Activated B cell treated with CpG ODN at 0.5 μM for 24 hours (primary cell): ENCODE measurements at regions of chr6 and their contacts with region 1.

Region 1: GRCh38 chr6:3356056-3356761 is 97.5 kb downstream of the PSMG4 start:
- DNase-seq: peak; percentile 70
- ATAC-seq: peak; percentile 97
- H3K4me3 Mint-ChIP-seq: peak overlapping the region; percentile 90
- H3K27ac Mint-ChIP-seq: peak overlapping the region; percentile 95
- H3K4me1 Mint-ChIP-seq: peaks cover 36% of the 10 kb centered on the region
- H3K27me3 Mint-ChIP-seq: no peaks in the 10 kb centered on the region
- CTCF ChIP-seq: no peak

Region 2: GRCh38 chr6:2765166-2765895 is 590.9 kb before region 1 on chr6 and contains the start of gene WRNIP1:
- CTCF ChIA-PET with region 1: no interaction called
- POLR2A ChIA-PET with region 1: no interaction called
- intact Hi-C with region 1: loop called (anchors 5 kb)
- DNase-seq: peak; percentile 92
- ATAC-seq: peak; percentile 89
- H3K4me3 Mint-ChIP-seq: peak within 1 kb of the TSS; percentile 93
- H3K27ac Mint-ChIP-seq: peak within 1 kb of the TSS; percentile 99
- H3K4me1 Mint-ChIP-seq: peaks cover 39% of the 10 kb centered on the region
- H3K27me3 Mint-ChIP-seq: no peaks in the 10 kb centered on the region
- CTCF ChIP-seq: no peak
- total RNA-seq, gene WRNIP1: 31.6 and 31.9 TPM in 2 replicates

Region 3: DNA sequence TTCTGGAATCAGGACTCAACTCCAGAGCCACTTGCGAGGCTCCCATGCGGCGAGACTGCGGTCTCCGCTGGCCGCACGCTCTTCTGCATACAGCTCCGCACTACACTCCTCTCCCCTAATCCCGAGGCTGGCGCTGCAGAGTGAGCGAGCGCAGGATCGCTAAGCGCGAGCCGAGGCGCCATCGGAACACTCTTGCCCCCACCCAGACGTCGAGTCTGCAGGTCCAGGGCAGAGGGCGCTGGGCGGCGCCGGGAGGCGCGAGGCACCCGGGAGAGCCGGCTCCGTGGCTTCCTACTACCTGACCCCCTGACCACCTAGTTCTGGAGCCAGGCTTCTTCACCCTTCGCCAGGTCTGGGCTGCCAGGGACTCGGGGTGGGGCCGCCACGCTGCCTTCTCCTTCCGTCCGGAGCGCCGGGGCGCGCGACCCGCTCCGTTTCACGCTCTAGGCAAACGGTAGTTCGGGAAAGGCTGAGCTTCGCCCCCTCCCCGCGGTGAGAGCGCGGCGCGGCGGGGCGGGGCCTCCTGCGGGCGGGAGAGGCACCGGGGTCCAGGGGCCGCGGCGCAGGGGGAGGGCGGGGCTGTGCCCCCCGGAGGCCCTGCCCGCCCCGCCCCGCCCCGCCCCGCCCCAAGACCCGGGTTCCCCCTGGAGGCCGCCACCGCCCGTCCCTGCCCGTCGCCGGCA is 193.5 kb before region 1 on chr6:
- CTCF ChIA-PET with region 1: no interaction called
- POLR2A ChIA-PET with region 1: no interaction called
- intact Hi-C with region 1: loop called (anchors 1 kb)
- DNase-seq: peak; percentile 70
- ATAC-seq: peak; percentile 82
- H3K4me3 Mint-ChIP-seq: peak overlapping the region; percentile 87
- H3K27ac Mint-ChIP-seq: peak overlapping the region; percentile 69
- H3K4me1 Mint-ChIP-seq: peaks cover 28% of the 10 kb centered on the region
- H3K27me3 Mint-ChIP-seq: peaks cover 2% of the 10 kb centered on the region
- CTCF ChIP-seq: no peak

Region 4: GRCh38 chr6:3389390-3390167 is 33.4 kb after region 1 on chr6:
- CTCF ChIA-PET with region 1: no interaction called
- POLR2A ChIA-PET with region 1: interaction called, 3 read pairs
- intact Hi-C with region 1: loop called (anchors 2 kb)
- DNase-seq: no peak
- ATAC-seq: no peak
- H3K4me3 Mint-ChIP-seq: no peak overlapping the region
- H3K27ac Mint-ChIP-seq: no peak overlapping the region
- H3K4me1 Mint-ChIP-seq: peaks cover 35% of the 10 kb centered on the region
- H3K27me3 Mint-ChIP-seq: peaks cover 5% of the 10 kb centered on the region
- CTCF ChIP-seq: no peak

Region 5: DNA sequence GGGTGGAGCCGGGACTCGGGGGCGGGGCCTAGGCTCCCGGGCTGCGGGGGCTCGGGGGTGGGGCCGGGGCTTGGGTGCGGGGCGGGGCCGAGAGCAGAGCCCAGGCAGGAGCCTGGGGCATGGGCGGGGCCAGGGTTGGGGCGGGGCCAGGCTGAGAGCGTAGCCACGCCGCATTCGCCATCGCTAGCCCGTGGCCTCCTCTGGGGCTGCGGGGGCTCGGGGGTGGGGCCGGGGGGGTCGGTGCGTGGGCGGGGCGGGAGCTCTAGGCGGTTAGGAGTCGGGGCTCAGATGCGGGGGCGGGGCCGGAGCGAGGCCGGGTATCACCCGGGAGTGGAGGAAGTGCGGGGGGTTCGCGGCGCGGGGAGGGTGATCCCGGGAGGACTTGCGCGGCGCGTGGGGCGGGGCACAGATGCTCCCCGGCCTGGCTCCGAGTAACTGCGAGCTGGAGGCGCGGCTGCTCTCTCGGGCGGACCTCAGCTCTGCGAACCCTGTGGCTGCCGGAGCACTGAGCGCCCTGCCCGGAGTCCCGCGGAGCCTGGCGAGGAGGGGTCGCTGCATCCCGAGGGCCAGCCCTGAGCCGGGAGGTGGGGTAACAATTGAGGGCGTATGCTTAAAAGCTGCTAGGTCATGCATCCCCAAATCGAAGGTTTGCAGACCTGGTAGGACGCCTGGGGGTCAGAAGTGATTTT is 779.6 kb after region 1 on chr6:
- CTCF ChIA-PET with region 1: no interaction called
- POLR2A ChIA-PET with region 1: no interaction called
- intact Hi-C with region 1: loop called (anchors 5 kb)
- DNase-seq: peak; percentile 83
- ATAC-seq: peak; percentile 92
- H3K4me3 Mint-ChIP-seq: peak overlapping the region; percentile 85
- H3K27ac Mint-ChIP-seq: peak overlapping the region; percentile 76
- H3K4me1 Mint-ChIP-seq: peaks cover 27% of the 10 kb centered on the region
- H3K27me3 Mint-ChIP-seq: no peaks in the 10 kb centered on the region
- CTCF ChIP-seq: no peak